Activated CD4-positive, alpha-beta memory T cell treated with anti-CD3 and anti-CD28 coated beads, Interleukin-2, amount 10 ng/mL, durations not matched to agents 7 days and 5 days (primary cell): ENCODE measurements at regions of chr7 and their contacts with region 1.

Region 1: DNA sequence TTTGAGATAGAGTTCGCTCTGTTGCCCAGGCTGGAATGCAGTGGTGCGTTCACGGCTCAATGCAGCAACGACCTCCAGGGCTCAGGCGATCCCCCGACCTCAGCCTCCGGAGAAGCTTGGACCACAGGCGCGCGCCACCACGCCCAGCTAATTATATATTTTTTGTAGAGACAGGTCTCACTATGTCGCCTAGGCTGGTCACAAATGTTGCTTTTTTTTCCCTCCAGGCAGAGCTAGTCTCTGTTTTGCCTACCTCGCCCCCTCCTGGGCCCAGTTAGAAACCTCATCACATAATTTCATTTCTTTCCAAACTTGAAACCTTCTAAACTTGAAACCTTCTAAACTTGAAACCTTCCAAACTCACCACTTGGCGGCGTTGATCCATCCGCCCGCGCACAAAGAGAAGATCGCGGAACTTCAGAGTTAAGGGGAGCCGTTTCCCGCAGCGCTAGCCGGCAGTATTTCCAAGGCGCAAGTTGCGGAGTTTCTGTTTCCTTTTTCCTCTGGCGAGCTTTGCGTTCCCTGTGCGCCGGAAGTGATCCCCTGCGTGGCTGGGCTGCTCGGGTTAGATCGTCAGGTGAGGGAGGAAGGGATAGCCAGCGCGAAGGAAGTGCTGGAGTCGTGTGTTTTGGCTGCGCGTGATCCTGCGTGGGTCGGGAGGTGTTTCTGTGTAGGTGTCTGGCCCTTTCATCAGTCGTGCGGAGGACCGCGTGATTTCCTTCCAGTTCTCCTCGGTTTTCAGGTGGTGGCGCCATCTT is at the start of gene SSBP1:
- DNase-seq: peak; percentile 94
- H3K4me3 Mint-ChIP-seq: peak within 1 kb of the TSS; percentile 94
- H3K27ac Mint-ChIP-seq: peak within 1 kb of the TSS; percentile 93
- H3K4me1 Mint-ChIP-seq: peaks cover 41% of the 10 kb centered on the region
- H3K27me3 Mint-ChIP-seq: no peaks in the 10 kb centered on the region
- total RNA-seq, gene SSBP1: 124 to 125 TPM

Region 2: DNA sequence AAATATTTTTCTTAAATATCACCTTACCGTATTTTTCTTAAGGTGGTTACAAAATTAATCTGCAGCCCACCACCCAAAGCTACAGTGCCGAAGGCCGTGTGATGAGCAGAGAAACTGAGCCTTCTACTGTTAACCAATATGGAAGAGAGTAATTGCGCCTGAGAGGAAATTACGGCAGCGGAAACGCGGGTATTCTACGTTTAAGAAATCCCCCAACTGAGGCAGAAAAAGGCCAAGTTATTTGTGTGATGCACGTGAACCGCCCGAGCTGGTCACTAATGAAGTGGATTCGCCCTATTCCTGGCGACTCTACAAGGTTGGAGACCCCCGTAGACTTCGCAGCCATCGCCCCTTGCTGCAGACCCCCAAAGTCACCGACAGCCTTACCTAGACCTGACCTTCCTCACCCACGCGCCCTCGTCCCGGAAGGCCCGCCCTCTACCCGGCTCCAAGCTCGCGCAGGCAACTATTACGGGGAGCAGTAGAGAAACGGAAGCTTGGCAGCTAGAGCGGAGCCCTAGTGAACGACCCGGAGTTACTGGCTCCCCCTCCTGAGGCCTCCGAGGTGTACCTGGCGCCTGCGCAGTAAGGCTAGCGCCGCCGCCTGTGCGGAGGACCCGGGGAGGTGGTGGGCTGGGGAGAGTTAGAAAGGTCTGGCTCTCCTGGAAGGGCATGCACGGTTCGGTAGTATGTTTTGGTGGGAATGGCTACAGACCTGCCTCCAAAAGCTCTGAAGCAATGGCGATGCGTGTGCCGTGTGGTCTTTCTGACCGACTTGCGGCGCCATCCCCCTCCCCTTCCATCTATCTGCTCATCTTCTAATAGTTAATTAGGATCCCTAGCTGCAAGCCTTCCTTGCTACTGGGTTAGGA is 723.3 kb before region 1 on chr7 and contains the start of gene MRPS33:
- CTCF ChIA-PET with region 1: interaction called, 10 read pairs
- POLR2A ChIA-PET with region 1: interaction called, 16 read pairs
- DNase-seq: peak; percentile 95
- H3K4me3 Mint-ChIP-seq: peak within 1 kb of the TSS; percentile 97
- H3K27ac Mint-ChIP-seq: peak within 1 kb of the TSS; percentile 96
- H3K4me1 Mint-ChIP-seq: peaks cover 38% of the 10 kb centered on the region
- H3K27me3 Mint-ChIP-seq: peaks cover 12% of the 10 kb centered on the region
- total RNA-seq, gene MRPS33: 58.5 to 68.3 TPM

Region 3: GRCh38 chr7:141387521-141388217 is 350.3 kb before region 1 on chr7:
- CTCF ChIA-PET with region 1: no interaction called
- POLR2A ChIA-PET with region 1: no interaction called
- DNase-seq: no peak
- H3K4me3 Mint-ChIP-seq: no peak overlapping the region
- H3K27ac Mint-ChIP-seq: no peak overlapping the region
- H3K4me1 Mint-ChIP-seq: no peaks in the 10 kb centered on the region
- H3K27me3 Mint-ChIP-seq: peaks cover 4% of the 10 kb centered on the region

Region 4: DNA sequence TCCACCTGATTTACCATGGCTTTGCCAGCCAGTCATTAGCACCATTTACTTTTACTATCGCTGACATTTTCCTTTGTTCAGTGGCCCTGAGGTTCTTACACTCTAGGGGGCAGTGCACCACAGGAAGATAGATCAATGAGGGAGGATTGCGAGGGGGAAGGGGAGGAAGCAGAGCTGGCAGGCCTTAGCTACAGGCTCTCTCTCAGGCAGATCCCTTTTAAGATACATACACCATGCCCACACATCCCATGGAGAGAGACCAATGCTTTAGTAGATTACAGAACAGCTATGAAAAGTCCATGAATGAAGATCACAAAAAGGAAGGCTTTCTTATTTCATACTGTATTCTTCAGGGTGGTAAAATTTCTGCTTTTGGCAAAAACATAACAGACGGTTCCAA is 83.5 kb before region 1 on chr7:
- CTCF ChIA-PET with region 1: interaction called, 71 read pairs
- POLR2A ChIA-PET with region 1: interaction called, 14 read pairs
- DNase-seq: peak; percentile 70
- H3K4me3 Mint-ChIP-seq: no peak overlapping the region
- H3K27ac Mint-ChIP-seq: peak overlapping the region; percentile 41
- H3K4me1 Mint-ChIP-seq: peaks cover 7% of the 10 kb centered on the region
- H3K27me3 Mint-ChIP-seq: no peaks in the 10 kb centered on the region

Region 5: GRCh38 chr7:141695803-141696289 is 42.2 kb before region 1 on chr7:
- CTCF ChIA-PET with region 1: interaction called, 16 read pairs
- POLR2A ChIA-PET with region 1: interaction called, 46 read pairs
- DNase-seq: no peak
- H3K4me3 Mint-ChIP-seq: no peak overlapping the region
- H3K27ac Mint-ChIP-seq: no peak overlapping the region
- H3K4me1 Mint-ChIP-seq: peaks cover 22% of the 10 kb centered on the region
- H3K27me3 Mint-ChIP-seq: peaks cover 9% of the 10 kb centered on the region

Region 6: GRCh38 chr7:141722529-141722928 is 15.5 kb before region 1 on chr7:
- CTCF ChIA-PET with region 1: interaction called, 16 read pairs
- POLR2A ChIA-PET with region 1: interaction called, 9 read pairs
- DNase-seq: no peak
- H3K4me3 Mint-ChIP-seq: no peak overlapping the region
- H3K27ac Mint-ChIP-seq: no peak overlapping the region
- H3K4me1 Mint-ChIP-seq: no peaks in the 10 kb centered on the region
- H3K27me3 Mint-ChIP-seq: no peaks in the 10 kb centered on the region

Region 7: GRCh38 chr7:141785706-141786552 is 47.9 kb after region 1 on chr7:
- CTCF ChIA-PET with region 1: interaction called, 10 read pairs
- POLR2A ChIA-PET with region 1: no interaction called
- DNase-seq: peak; percentile 31
- H3K4me3 Mint-ChIP-seq: no peak overlapping the region
- H3K27ac Mint-ChIP-seq: no peak overlapping the region
- H3K4me1 Mint-ChIP-seq: no peaks in the 10 kb centered on the region
- H3K27me3 Mint-ChIP-seq: no peaks in the 10 kb centered on the region

Region 8: GRCh38 chr7:141884539-141885225 is 146.7 kb after region 1 on chr7:
- CTCF ChIA-PET with region 1: no interaction called
- POLR2A ChIA-PET with region 1: no interaction called
- DNase-seq: no peak
- H3K4me3 Mint-ChIP-seq: no peak overlapping the region
- H3K27ac Mint-ChIP-seq: no peak overlapping the region
- H3K4me1 Mint-ChIP-seq: no peaks in the 10 kb centered on the region
- H3K27me3 Mint-ChIP-seq: no peaks in the 10 kb centered on the region